ENCODE measurements at regions of chr2 and their contacts with region 1.

Region 1: GRCh38 chr2:174180165-174180724 is 68.1 kb downstream of the OLA1 start:
- DNase-seq: no peak
- H3K4me3 ChIP-seq: no peak overlapping the region
- H3K27ac ChIP-seq: peak overlapping the region; percentile 3
- H3K4me1 ChIP-seq: no peaks in the 10 kb centered on the region
- H3K27me3 ChIP-seq: no peaks in the 10 kb centered on the region
- CTCF ChIP-seq: no peak; the same call in 1 of the 2 replicates

Region 2: GRCh38 chr2:173658946-173659371 is 521.3 kb before region 1 on chr2:
- CTCF ChIA-PET with region 1: interaction called, 14 read pairs
- POLR2A ChIA-PET with region 1: no interaction called
- intact Hi-C with region 1: no loop called
- DNase-seq: no peak
- H3K4me3 ChIP-seq: no peak overlapping the region
- H3K27ac ChIP-seq: no peak overlapping the region
- H3K4me1 ChIP-seq: no peaks in the 10 kb centered on the region
- H3K27me3 ChIP-seq: no peaks in the 10 kb centered on the region; the same call in 1 of the 2 replicates
- CTCF ChIP-seq: no peak

Region 3: GRCh38 chr2:174217869-174218268 is 37.6 kb after region 1 on chr2:
- CTCF ChIA-PET with region 1: no interaction called
- POLR2A ChIA-PET with region 1: interaction called, 12 read pairs
- intact Hi-C with region 1: no loop called
- DNase-seq: no peak
- H3K4me3 ChIP-seq: no peak overlapping the region
- H3K27ac ChIP-seq: 0 out of 2 replicates have a peak overlapping the region, but pooled peaks have one; percentile 1
- H3K4me1 ChIP-seq: no peaks in the 10 kb centered on the region
- H3K27me3 ChIP-seq: no peaks in the 10 kb centered on the region
- CTCF ChIP-seq: no peak

Region 4: DNA sequence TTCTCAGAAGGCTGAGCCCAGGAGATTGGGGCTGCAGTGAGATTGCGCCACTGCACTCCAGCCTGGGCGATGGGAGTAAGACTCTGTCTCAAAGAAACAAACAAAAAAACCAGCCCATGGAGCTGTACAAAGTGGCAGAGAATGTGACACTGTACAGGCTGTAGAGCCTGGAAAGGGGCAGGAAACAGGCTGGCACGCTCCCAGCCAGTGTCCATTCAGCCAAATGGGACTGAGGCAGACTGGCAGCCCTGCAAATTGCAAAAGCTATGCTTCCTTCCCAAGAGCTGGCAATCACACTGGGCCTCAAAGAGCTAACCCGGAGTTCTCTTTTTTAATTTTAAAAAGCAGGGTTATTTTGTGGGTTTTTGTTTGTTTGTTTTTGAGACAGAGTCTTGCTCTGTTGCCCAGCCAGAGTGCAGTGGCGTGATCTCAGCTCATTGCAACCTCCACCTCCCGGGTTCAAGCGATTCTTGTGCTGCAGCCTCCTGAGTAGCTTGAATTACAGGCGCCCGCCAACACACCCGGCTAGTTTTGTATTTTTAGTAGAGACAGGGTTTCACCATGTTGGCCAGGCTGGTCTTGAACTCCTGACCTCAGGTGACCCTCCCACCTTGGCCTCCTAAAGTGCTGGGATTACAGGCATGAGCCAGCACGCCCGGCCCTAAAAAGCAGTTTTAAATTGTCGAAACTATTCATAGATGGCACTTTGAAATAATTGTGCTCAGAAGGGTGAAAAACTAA is 258.1 kb after region 1 on chr2:
- CTCF ChIA-PET with region 1: no interaction called
- POLR2A ChIA-PET with region 1: no interaction called
- intact Hi-C with region 1: no loop called
- DNase-seq: no peak
- H3K4me3 ChIP-seq: no peak overlapping the region
- H3K27ac ChIP-seq: no peak overlapping the region
- H3K4me1 ChIP-seq: peaks cover 13% of the 10 kb centered on the region
- H3K27me3 ChIP-seq: no peaks in the 10 kb centered on the region
- CTCF ChIP-seq: no peak

Measured in PC-9 (cell line).